Ascending aorta (tissue), 2 donors: ENCODE measurements at regions of chr5 and their contacts with region 1.

Region 1: GRCh38 chr5:160342403-160342941 is 28.0 kb downstream of the C1QTNF2 start:
- DNase-seq: no peak
- H3K4me3 ChIP-seq: no peak overlapping the region
- H3K27ac ChIP-seq: no peak overlapping the region
- H3K4me1 ChIP-seq: no peaks in the 10 kb centered on the region
- H3K27me3 ChIP-seq: no peaks in the 10 kb centered on the region
- CTCF ChIP-seq: no peak

Region 2: DNA sequence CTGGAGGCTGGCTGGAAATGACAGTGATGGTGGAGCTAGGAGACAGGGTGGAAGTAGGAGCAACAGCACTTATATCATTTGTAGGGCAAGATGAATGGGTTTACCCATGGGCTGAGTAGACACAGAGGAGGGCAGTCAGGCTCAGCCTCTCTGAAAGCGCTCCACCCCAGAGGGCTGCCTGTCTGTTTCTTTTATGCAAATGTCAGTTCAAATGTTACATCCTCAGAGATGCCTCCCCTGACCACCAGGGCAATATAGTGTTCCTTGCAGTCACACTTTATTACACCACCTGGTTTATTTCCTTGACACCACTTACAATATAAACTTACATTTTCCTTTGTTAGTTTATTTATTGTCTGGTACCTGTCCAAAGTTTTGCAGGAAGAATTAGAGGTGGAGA is 852.7 kb before region 1 on chr5:
- intact Hi-C with region 1: no loop called
- DNase-seq: no peak
- H3K4me3 ChIP-seq: no peak overlapping the region
- H3K27ac ChIP-seq: no peak overlapping the region
- H3K4me1 ChIP-seq: no peaks in the 10 kb centered on the region
- H3K27me3 ChIP-seq: no peaks in the 10 kb centered on the region
- CTCF ChIP-seq: no peak

Region 3: DNA sequence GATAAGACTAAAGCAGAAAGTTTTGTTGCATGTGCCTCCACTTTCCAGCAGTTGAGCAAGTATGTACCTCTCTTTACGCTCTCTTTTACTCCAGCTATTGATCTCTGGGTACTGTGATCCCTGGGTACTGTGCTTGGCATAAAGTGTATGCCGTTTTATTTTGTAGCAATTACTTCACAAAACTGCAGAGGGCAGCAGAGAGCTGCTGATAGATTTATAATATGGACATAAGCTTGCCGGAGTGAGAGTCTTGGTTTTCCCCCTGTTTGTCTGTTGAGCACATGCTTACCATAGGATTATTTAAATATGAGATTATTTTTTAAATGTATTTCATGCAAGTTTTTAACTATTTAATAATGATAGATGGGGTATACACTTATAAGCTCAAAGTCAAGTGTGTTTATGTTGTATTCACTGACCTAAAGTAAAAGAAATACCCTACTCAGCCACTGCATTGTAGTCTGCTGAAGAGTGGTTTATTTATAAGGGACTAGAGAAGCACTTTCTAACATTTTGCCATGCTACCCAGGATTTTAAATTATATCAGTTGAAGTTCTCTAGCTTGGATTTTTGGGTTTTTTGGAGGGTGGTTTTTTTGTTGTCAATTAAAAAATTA is 320.5 kb before region 1 on chr5:
- intact Hi-C with region 1: loop called (anchors 1 kb)
- DNase-seq: no peak
- H3K4me3 ChIP-seq: no peak overlapping the region
- H3K27ac ChIP-seq: no peak overlapping the region
- H3K4me1 ChIP-seq: peaks cover 0 to 4% of the 10 kb centered on the region in 2 donors
- H3K27me3 ChIP-seq: no peaks in the 10 kb centered on the region
- CTCF ChIP-seq: peak; percentile 70 to 83 (median 73)

Region 4: GRCh38 chr5:160082614-160083500 is 259.6 kb before region 1 on chr5:
- intact Hi-C with region 1: loop called (anchors 5 kb)
- DNase-seq: no peak
- H3K4me3 ChIP-seq: peak overlapping the region in 1 of 2 donors; percentile 8
- H3K27ac ChIP-seq: peak overlapping the region; percentile 14 to 58
- H3K4me1 ChIP-seq: peaks cover 0 to 26% of the 10 kb centered on the region in 2 donors
- H3K27me3 ChIP-seq: no peaks in the 10 kb centered on the region
- CTCF ChIP-seq: no peak

Region 5: GRCh38 chr5:160221082-160221481 is 121.4 kb before region 1 on chr5:
- intact Hi-C with region 1: no loop called
- DNase-seq: no peak
- H3K4me3 ChIP-seq: no peak overlapping the region
- H3K27ac ChIP-seq: no peak overlapping the region
- H3K4me1 ChIP-seq: no peaks in the 10 kb centered on the region
- H3K27me3 ChIP-seq: no peaks in the 10 kb centered on the region
- CTCF ChIP-seq: no peak

Region 6: GRCh38 chr5:160390787-160391696 is 48.6 kb after region 1 on chr5:
- intact Hi-C with region 1: loop called (anchors 2 kb)
- DNase-seq: no peak
- H3K4me3 ChIP-seq: no peak overlapping the region
- H3K27ac ChIP-seq: no peak overlapping the region
- H3K4me1 ChIP-seq: peaks cover 0 to 5% of the 10 kb centered on the region in 2 donors
- H3K27me3 ChIP-seq: no peaks in the 10 kb centered on the region
- CTCF ChIP-seq: peak; percentile 42 to 54 (median 48)